GM12878 (cell line): ENCODE measurements at regions of chr16 and their contacts with region 1.

Region 1: GRCh38 chr16:23678430-23679273 is at the start of gene PLK1:
- DNase-seq: peak; percentile 37
- ATAC-seq: peak; percentile 98
- H3K4me3 ChIP-seq: peak within 1 kb of the TSS; percentile 97
- H3K27ac ChIP-seq: peak within 1 kb of the TSS; percentile 85
- H3K4me1 ChIP-seq: peaks cover 17% of the 10 kb centered on the region
- H3K27me3 ChIP-seq: no peaks in the 10 kb centered on the region
- CTCF ChIP-seq: peak; percentile 30 to 41 (median 33); a peak in 4 of 6 replicates
- EP300 ChIP-seq: no peak
- POLR2A ChIP-seq: peak; percentile 84
- RAD21 ChIP-seq: peak; percentile 30; the same call in 1 of the 2 replicates
- polyA plus RNA-seq, gene PLK1: 11.3 to 19.5 TPM

Region 2: GRCh38 chr16:23608194-23608593 is 70.5 kb before region 1 on chr16:
- CTCF ChIA-PET with region 1: no interaction called
- POLR2A ChIA-PET with region 1: no interaction called
- RAD21 ChIA-PET with region 1: no interaction called
- SMC1A ChIA-PET with region 1: no interaction called
- in situ Hi-C with region 1: no loop called
- intact Hi-C with region 1: no loop called
- DNase-seq: no peak
- ATAC-seq: no peak
- H3K4me3 ChIP-seq: no peak overlapping the region
- H3K27ac ChIP-seq: no peak overlapping the region
- H3K4me1 ChIP-seq: no peaks in the 10 kb centered on the region
- H3K27me3 ChIP-seq: no peaks in the 10 kb centered on the region
- CTCF ChIP-seq: no peak
- EP300 ChIP-seq: no peak
- POLR2A ChIP-seq: no peak
- RAD21 ChIP-seq: no peak

Region 3: GRCh38 chr16:23640931-23641765 is 37.5 kb before region 1 on chr16 and contains the starts of genes DCTN5 and PALB2:
- CTCF ChIA-PET with region 1: interaction called, 5 read pairs
- POLR2A ChIA-PET with region 1: interaction called, 4 read pairs
- RAD21 ChIA-PET with region 1: interaction called, 4 read pairs
- SMC1A ChIA-PET with region 1: interaction called, 3 read pairs
- in situ Hi-C with region 1: no loop called
- intact Hi-C with region 1: loop called (anchors 5 kb)
- DNase-seq: peak; percentile 83
- ATAC-seq: peak; percentile 96
- H3K4me3 ChIP-seq: peak within 1 kb of the TSS; percentile 92
- H3K27ac ChIP-seq: peak within 1 kb of the TSS; percentile 84
- H3K4me1 ChIP-seq: peaks cover 3% of the 10 kb centered on the region; the same call in 1 of the 2 replicates
- H3K27me3 ChIP-seq: no peaks in the 10 kb centered on the region
- CTCF ChIP-seq: no peak
- EP300 ChIP-seq: no peak
- POLR2A ChIP-seq: peak; percentile 85
- RAD21 ChIP-seq: no peak
- polyA plus RNA-seq, gene DCTN5: 69.2 to 72.5 TPM
- polyA plus RNA-seq, gene PALB2: 9.2 to 15.1 TPM

Region 4: DNA sequence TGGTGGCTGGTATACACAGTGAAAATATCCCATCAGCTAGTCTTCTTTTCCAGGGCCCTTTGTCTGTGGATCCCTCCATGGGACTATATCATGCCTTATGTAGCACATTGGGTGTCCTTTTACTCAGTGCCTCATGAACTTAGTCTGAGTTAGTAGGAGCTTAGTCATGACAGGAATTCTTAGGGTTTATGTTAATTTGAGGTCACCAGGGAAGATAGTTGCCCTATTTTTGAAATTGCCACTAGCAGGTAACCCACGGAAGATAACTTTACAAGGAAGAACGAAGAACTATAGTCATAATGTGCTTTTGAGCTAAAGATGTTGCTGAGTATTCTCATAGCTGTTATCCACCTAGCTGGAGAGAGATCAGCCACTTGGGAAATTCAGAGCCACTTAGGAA is 14.7 kb before region 1 on chr16:
- CTCF ChIA-PET with region 1: interaction called, 26 read pairs
- POLR2A ChIA-PET with region 1: interaction called, 3 read pairs
- RAD21 ChIA-PET with region 1: interaction called, 5 read pairs
- SMC1A ChIA-PET with region 1: no interaction called
- in situ Hi-C with region 1: no loop called
- intact Hi-C with region 1: no loop called
- DNase-seq: no peak
- ATAC-seq: no peak
- H3K4me3 ChIP-seq: no peak overlapping the region
- H3K27ac ChIP-seq: peak overlapping the region; percentile 8; the same call in 1 of the 2 replicates
- H3K4me1 ChIP-seq: no peaks in the 10 kb centered on the region
- H3K27me3 ChIP-seq: no peaks in the 10 kb centered on the region
- CTCF ChIP-seq: no peak
- EP300 ChIP-seq: no peak
- POLR2A ChIP-seq: no peak
- RAD21 ChIP-seq: no peak